Activated CD4-positive, alpha-beta memory T cell treated with anti-CD3 and anti-CD28 coated beads for 36 hours (primary cell): ENCODE measurements at regions of chr12 and their contacts with region 1.

Region 1: DNA sequence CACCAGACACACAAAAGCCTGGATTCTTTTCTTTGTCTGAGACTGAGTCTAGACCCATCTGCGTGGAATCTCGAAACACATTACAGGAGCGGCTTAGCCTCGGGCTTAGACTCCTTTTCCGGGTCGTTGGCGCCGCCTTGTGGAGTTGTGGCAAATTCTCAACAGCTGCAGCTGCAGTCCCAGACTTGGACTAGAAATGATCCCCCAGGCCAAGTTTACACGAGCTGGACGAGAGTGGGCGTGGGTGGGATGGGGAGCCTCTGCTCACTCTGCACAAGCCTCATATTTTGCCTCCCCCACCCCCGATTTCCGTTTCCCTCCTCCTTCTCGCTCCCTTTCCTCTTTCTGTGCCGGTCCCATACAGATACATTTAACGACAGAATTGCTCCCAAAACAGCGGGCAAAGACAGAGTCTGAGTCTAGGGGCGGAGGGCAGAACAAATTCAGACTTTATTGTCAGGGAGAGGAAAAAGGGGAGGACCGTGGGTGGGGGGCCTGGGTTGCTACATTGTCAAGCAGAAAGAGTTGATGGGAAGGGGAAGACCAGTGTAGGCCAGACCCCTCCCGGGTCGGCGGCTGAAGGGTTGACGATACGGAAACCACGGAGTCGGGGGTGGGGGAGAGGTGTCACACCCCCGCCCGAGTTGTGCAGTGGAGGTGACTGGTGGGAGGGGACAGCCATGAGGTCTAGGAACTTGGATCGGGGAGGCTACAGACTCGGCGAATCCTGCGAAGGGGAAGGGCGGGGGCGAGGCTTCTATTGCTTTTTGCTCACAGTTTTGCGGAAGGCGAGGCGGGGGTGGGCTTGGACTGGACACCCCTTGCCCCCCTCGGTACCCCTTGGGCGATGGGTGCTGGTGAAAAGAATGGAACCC is 4.7 kb upstream of the GPR84 start:
- DNase-seq: peak; percentile 93
- H3K4me3 Mint-ChIP-seq: no peak overlapping the region
- H3K27ac Mint-ChIP-seq: no peak overlapping the region
- H3K4me1 Mint-ChIP-seq: peaks cover 40% of the 10 kb centered on the region
- H3K27me3 Mint-ChIP-seq: peaks cover 3% of the 10 kb centered on the region

Region 2: GRCh38 chr12:54214553-54215406 is 154.2 kb before region 1 on chr12:
- CTCF ChIA-PET with region 1: interaction called, 36 read pairs
- POLR2A ChIA-PET with region 1: no interaction called
- intact Hi-C with region 1: loop called (anchors 1 kb)
- DNase-seq: peak; percentile 94
- H3K4me3 Mint-ChIP-seq: peak overlapping the region; percentile 70
- H3K27ac Mint-ChIP-seq: no peak overlapping the region
- H3K4me1 Mint-ChIP-seq: peaks cover 20% of the 10 kb centered on the region
- H3K27me3 Mint-ChIP-seq: no peaks in the 10 kb centered on the region

Region 3: GRCh38 chr12:54285150-54286041 is 83.5 kb before region 1 on chr12:
- CTCF ChIA-PET with region 1: interaction called, 96 read pairs
- POLR2A ChIA-PET with region 1: interaction called, 3 read pairs
- intact Hi-C with region 1: no loop called
- DNase-seq: no peak
- H3K4me3 Mint-ChIP-seq: peak overlapping the region; percentile 47
- H3K27ac Mint-ChIP-seq: peak overlapping the region; percentile 52
- H3K4me1 Mint-ChIP-seq: peaks cover 39% of the 10 kb centered on the region
- H3K27me3 Mint-ChIP-seq: no peaks in the 10 kb centered on the region

Region 4: DNA sequence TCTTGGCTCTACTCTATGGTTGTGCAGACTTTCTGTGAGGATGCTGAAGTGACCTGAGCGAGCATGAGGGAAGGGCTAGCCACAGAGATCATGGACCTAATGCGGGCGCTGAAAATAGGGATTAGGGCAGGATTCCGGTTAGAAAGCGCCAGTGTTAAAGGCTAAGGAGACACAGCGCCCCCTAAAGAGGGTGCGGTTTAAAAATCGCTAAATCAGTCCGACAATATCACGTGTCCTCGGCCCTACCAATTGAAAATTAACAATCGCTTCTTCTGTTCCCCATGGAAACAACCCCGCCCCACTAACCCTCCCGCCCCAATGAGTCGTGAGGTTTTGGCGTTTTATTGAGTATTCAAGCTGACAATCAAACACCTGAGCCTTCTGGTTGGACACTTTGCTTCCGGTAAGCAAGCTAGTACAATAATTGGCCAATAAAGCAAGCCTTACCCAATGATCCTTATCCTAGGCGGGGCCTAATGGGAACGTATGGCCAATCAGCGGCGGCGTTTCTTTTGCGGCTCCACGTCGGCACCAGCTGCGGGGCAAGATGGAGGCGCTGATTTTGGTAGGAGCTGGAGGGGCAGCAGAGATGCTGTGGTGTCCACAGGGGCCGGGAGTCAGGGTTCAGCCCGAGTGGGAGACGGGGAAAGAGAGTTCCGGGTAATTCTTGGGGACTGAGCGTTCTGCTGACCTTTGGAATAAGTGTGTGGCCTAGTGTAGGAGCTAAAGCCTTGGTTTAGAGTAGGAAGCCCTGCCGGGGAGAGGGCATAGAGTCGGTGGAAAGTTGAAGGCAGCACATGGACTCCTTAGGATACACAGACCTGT is 44.1 kb before region 1 on chr12 and contains the start of gene COPZ1:
- CTCF ChIA-PET with region 1: interaction called, 8 read pairs
- POLR2A ChIA-PET with region 1: no interaction called
- intact Hi-C with region 1: loop called (anchors 2 kb)
- DNase-seq: peak; percentile 97
- H3K4me3 Mint-ChIP-seq: peak within 1 kb of the TSS; percentile 95
- H3K27ac Mint-ChIP-seq: peak within 1 kb of the TSS; percentile 84
- H3K4me1 Mint-ChIP-seq: peaks cover 33% of the 10 kb centered on the region
- H3K27me3 Mint-ChIP-seq: no peaks in the 10 kb centered on the region
- total RNA-seq, gene COPZ1: 99.0 to 110 TPM

Region 5: GRCh38 chr12:54379401-54380201 is 10.7 kb after region 1 on chr12:
- CTCF ChIA-PET with region 1: interaction called, 36 read pairs
- POLR2A ChIA-PET with region 1: interaction called, 4 read pairs
- intact Hi-C with region 1: loop called (anchors 1 kb)
- DNase-seq: peak; percentile 94
- H3K4me3 Mint-ChIP-seq: peak overlapping the region; percentile 22
- H3K27ac Mint-ChIP-seq: no peak overlapping the region
- H3K4me1 Mint-ChIP-seq: peaks cover 10% of the 10 kb centered on the region
- H3K27me3 Mint-ChIP-seq: no peaks in the 10 kb centered on the region

Region 6: GRCh38 chr12:54549774-54550451 is 181.0 kb after region 1 on chr12:
- CTCF ChIA-PET with region 1: no interaction called
- POLR2A ChIA-PET with region 1: no interaction called
- intact Hi-C with region 1: no loop called
- DNase-seq: peak; percentile 58
- H3K4me3 Mint-ChIP-seq: peak overlapping the region; percentile 73
- H3K27ac Mint-ChIP-seq: no peak overlapping the region
- H3K4me1 Mint-ChIP-seq: peaks cover 37% of the 10 kb centered on the region
- H3K27me3 Mint-ChIP-seq: no peaks in the 10 kb centered on the region